Tibial artery (tissue), 4 donors: ENCODE measurements at regions of chr6 and their contacts with region 1.

Region 1: DNA sequence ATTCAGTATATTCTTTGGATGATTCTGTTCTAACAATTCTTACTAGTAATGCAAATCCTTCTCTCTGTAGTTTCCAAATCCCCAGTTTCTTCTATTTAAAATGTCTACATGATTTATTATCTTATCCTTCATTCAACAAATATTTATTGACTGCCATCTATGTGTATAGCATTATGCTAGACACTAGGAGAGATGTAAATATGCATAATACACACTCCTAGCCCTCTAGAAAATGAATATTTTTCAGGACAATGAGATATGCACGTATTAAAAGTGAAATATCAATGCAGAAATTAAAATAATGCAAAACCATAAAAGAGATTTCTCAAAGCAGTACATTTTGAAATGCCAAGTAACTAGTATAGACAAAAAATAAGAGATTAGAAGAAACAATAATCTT is 293.5 kb upstream of the CNR1 start:
- DNase-seq: no peak
- H3K4me3 ChIP-seq: no peak overlapping the region
- H3K27ac ChIP-seq: no peak overlapping the region
- H3K4me1 ChIP-seq: peaks cover 0 to 17% (median 7%) of the 10 kb centered on the region in 4 donors
- H3K27me3 ChIP-seq: no peaks in the 10 kb centered on the region
- CTCF ChIP-seq: no peak

Region 2: DNA sequence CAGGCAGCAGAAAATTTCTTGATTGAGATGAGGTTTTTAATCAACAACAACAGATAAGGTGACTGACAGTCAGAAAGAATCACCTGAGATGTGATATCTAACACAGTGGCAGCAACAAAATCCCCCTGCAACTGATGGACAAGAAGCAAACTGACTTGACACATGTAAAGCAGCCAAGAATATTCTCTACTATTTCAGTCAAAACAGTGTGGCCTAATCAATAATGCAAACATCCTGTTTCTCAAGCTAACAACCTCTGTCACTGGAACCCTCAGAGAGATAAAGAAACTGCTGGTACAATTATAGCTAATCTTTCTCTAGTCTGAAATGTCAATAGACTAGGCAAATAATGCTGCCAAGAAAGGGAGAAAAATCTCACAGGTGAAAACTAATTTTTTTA is 1360.2 kb before region 1 on chr6:
- intact Hi-C with region 1: loop called (anchors 5 kb)
- DNase-seq: no peak
- H3K4me3 ChIP-seq: no peak overlapping the region
- H3K27ac ChIP-seq: no peak overlapping the region
- H3K4me1 ChIP-seq: no peaks in the 10 kb centered on the region
- H3K27me3 ChIP-seq: peaks cover 0 to 6% of the 10 kb centered on the region in 2 donors
- CTCF ChIP-seq: no peak

Region 3: DNA sequence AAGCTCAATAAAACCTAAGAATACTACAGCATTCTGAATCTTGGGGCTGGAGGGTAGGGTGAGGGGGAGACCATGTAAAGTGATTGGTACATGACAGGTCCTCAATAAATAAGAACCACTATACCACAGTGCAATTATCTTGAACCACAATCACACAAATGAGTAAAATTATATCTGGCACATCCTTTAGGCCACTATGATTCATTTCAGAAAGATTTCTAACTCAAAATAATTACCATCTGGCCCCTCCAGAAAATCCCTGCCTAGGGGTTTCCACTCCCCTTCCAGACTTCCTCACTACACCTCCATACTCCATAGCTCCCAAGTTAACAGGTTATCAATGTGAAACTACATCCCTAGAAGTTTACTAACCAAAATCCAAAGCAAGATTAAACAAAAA is 777.3 kb before region 1 on chr6:
- intact Hi-C with region 1: no loop called
- DNase-seq: no peak
- H3K4me3 ChIP-seq: no peak overlapping the region
- H3K27ac ChIP-seq: no peak overlapping the region
- H3K4me1 ChIP-seq: peaks cover 0 to 68% (median 0%) of the 10 kb centered on the region in 4 donors
- H3K27me3 ChIP-seq: no peaks in the 10 kb centered on the region
- CTCF ChIP-seq: no peak

Region 4: DNA sequence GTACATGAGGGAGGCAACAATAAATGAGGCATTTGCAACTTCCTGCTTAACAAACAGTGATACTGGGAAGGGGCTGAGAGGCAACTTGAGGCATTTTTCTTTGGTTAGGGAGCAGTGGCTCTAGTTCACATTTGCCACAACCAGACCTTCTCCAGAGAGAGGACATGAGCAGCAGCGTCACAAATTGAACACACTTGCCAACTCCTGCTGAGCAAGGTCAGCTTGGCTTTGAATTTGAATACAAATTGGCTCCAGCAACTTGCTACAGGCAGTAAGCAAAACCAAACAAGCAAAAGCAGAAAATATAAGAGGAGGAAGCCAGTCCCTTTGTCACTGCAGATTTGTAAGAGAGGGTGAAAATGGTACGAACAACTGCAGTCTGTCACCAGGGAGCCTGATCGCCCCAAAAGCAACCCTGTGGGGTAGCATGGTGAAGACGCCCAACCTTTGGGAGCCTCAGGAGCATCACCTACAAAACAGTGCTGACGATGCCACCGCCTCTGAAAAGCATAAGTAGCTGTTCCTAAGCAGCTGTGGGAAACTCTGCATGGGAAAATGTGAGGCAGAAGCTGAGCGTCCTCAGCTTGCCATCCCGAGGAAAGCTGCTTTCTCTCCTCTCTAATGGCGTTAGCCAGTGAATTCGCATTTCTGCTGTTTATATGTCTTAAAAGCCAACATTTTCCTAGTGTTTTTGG is 125.1 kb after region 1 on chr6:
- intact Hi-C with region 1: no loop called
- DNase-seq: no peak
- H3K4me3 ChIP-seq: no peak overlapping the region
- H3K27ac ChIP-seq: peak overlapping the region in 1 of 2 donors; percentile 71
- H3K4me1 ChIP-seq: peaks cover 0 to 34% (median 23%) of the 10 kb centered on the region in 4 donors
- H3K27me3 ChIP-seq: no peaks in the 10 kb centered on the region
- CTCF ChIP-seq: no peak